Cardiac septum (tissue), 1 donor: ENCODE measurements at regions of chr9 and their contacts with region 1.

Region 1: DNA sequence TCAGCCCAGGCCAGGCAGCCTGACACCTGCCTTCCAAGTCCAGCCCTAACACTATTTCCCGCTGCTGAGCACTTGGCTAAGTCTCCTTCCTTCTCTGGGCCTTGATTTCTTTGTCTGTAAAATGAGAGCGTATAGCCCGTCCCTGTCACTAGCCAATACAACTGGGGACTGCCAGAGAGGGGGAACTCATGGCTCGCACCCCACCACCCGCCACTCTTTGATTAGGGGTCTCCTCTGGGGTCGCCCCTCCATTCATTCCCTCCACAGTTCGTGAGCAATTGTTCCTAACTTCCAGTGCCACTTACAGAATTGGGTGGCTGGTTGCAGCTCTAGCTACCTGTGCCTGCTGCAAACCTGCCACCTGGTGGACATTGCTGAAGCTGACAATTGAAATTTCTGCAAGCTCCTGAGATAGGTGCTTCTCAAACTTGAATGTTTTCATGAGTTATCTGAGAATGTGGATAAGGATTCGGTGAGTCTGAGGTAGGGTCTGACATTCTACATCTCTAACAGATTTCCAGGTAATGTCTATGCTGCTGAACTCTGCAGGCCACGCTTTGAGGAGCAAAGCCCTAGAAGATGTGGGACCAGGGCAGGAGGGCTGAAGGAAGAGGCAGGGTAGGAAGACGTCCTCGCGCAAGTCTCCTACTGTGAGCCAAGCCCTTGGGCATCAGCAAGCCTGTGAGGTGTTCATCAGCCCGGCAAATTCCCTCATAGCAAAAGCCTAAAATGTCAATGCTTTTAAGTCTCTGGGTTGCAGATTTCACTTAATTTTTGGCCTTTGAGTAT is 13.3 kb upstream of the RECK start:
- DNase-seq: peak; percentile 78

Region 2: GRCh38 chr9:35954942-35955546 is 68.4 kb before region 1 on chr9:
- intact Hi-C with region 1: loop called (anchors 2 kb)
- DNase-seq: no peak